CD8-positive, alpha-beta T cell (primary cell): ENCODE measurements at regions of chr7 and their contacts with region 1.

Region 1: DNA sequence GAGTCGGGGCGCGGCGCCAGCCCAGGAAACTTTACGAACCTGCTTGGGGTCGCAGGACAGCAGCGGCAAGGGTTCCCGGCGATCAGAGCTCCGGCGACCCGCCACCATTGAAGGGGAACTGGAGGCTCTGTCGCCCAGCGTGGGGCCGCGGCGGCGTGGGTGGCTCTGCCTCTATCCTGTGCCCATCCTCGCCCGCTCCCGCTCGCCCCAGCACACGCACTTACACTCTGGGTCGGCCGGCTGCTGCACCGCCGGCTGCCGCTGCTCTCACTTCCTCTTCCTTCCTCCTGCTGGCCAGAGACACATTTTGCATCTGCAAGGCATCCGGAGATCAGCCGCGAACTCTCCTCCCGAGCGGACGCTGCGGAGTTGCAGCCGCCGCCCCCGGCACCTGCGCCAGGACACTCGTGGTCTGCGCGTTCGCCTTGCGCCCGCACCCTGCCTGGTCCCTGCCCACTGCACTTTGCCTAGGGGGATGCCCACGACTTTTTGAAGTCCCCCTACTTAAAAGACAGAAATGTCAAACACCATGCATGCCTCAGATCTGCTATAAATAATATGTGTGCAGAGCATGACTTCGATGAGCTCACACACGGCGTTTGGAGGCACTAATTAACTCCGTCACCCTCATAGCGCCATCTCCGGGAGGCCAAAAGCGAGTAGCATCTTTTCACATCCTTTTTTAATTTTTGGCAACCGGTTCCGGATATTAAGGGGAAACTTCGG is at the start of gene ELMO1:
- DNase-seq: peak; percentile 50 to 92 (median 76)
- ATAC-seq: peak; percentile 76
- H3K4me3 ChIP-seq: peak within 1 kb of the TSS; percentile 71 to 91
- H3K4me3 Mint-ChIP-seq: peak within 1 kb of the TSS; percentile 95
- H3K27ac ChIP-seq: peak within 1 kb of the TSS; percentile 86 to 87
- H3K27ac Mint-ChIP-seq: peak within 1 kb of the TSS; percentile 98
- H3K4me1 ChIP-seq: peaks cover 29% of the 10 kb centered on the region
- H3K4me1 Mint-ChIP-seq: peaks cover 48% of the 10 kb centered on the region
- H3K27me3 ChIP-seq: no peaks in the 10 kb centered on the region
- H3K27me3 Mint-ChIP-seq: no peaks in the 10 kb centered on the region
- CTCF ChIP-seq: peak; percentile 68
- total RNA-seq, gene ELMO1: 79.4 to 96.2 TPM

Region 2: GRCh38 chr7:36152756-36153570 is 1295.8 kb before region 1 on chr7 and contains the start of gene EEPD1:
- CTCF ChIA-PET with region 1: no interaction called
- POLR2A ChIA-PET with region 1: no interaction called
- intact Hi-C with region 1: loop called (anchors 2 to 5 kb)
- DNase-seq: peak; percentile 98 to 100 (median 100)
- ATAC-seq: peak; percentile 94
- H3K4me3 ChIP-seq: peak within 1 kb of the TSS; percentile 60 to 73
- H3K4me3 Mint-ChIP-seq: peak within 1 kb of the TSS; percentile 87
- H3K27ac ChIP-seq: peak within 1 kb of the TSS; percentile 35 to 54
- H3K27ac Mint-ChIP-seq: peak within 1 kb of the TSS; percentile 25
- H3K4me1 ChIP-seq: peaks cover 12% of the 10 kb centered on the region
- H3K4me1 Mint-ChIP-seq: peaks cover 24% of the 10 kb centered on the region
- H3K27me3 ChIP-seq: no peaks in the 10 kb centered on the region
- H3K27me3 Mint-ChIP-seq: no peaks in the 10 kb centered on the region
- CTCF ChIP-seq: no peak
- total RNA-seq, gene EEPD1: 0.98 to 1.1 TPM

Region 3: GRCh38 chr7:36280840-36281812 is 1167.7 kb before region 1 on chr7:
- CTCF ChIA-PET with region 1: no interaction called
- POLR2A ChIA-PET with region 1: no interaction called
- intact Hi-C with region 1: no loop called
- DNase-seq: peak in 2 of 9 experiments; percentile 24 to 33
- ATAC-seq: no peak
- H3K4me3 ChIP-seq: no peak overlapping the region
- H3K4me3 Mint-ChIP-seq: no peak overlapping the region
- H3K27ac ChIP-seq: no peak overlapping the region
- H3K27ac Mint-ChIP-seq: no peak overlapping the region
- H3K4me1 ChIP-seq: peaks cover 34% of the 10 kb centered on the region
- H3K4me1 Mint-ChIP-seq: peaks cover 31% of the 10 kb centered on the region
- H3K27me3 ChIP-seq: no peaks in the 10 kb centered on the region
- H3K27me3 Mint-ChIP-seq: no peaks in the 10 kb centered on the region
- CTCF ChIP-seq: no peak

Region 4: DNA sequence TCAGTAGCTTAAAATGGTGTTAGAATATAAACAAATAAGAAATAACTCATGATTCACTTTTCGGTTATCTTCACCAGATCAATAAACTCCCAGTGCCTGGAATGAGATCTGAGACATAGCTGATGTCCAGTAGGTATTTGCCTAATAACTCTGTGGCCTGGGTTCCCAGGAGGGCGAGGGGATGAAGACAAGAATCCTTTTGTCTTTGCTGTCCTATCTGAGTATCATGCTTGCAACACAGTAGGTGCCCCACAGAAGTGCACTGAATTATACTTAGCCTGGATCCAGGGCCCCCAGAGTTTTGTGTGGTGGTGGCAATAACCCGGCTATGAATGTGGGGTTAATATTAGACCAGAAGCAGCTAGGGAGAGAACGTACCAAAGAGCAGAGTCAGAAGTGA is 374.4 kb before region 1 on chr7:
- CTCF ChIA-PET with region 1: no interaction called
- POLR2A ChIA-PET with region 1: no interaction called
- intact Hi-C with region 1: no loop called
- DNase-seq: no peak
- ATAC-seq: no peak
- H3K4me3 ChIP-seq: no peak overlapping the region
- H3K4me3 Mint-ChIP-seq: no peak overlapping the region
- H3K27ac ChIP-seq: no peak overlapping the region
- H3K27ac Mint-ChIP-seq: no peak overlapping the region
- H3K4me1 ChIP-seq: no peaks in the 10 kb centered on the region
- H3K4me1 Mint-ChIP-seq: no peaks in the 10 kb centered on the region
- H3K27me3 ChIP-seq: no peaks in the 10 kb centered on the region
- H3K27me3 Mint-ChIP-seq: no peaks in the 10 kb centered on the region
- CTCF ChIP-seq: no peak

Region 5: GRCh38 chr7:37160656-37161055 is 288.1 kb before region 1 on chr7:
- CTCF ChIA-PET with region 1: no interaction called
- POLR2A ChIA-PET with region 1: no interaction called
- intact Hi-C with region 1: no loop called
- DNase-seq: no peak
- ATAC-seq: no peak
- H3K4me3 ChIP-seq: no peak overlapping the region
- H3K4me3 Mint-ChIP-seq: no peak overlapping the region
- H3K27ac ChIP-seq: no peak overlapping the region
- H3K27ac Mint-ChIP-seq: peak overlapping the region; percentile 46
- H3K4me1 ChIP-seq: no peaks in the 10 kb centered on the region
- H3K4me1 Mint-ChIP-seq: peaks cover 2% of the 10 kb centered on the region
- H3K27me3 ChIP-seq: no peaks in the 10 kb centered on the region
- H3K27me3 Mint-ChIP-seq: no peaks in the 10 kb centered on the region
- CTCF ChIP-seq: no peak

Region 6: DNA sequence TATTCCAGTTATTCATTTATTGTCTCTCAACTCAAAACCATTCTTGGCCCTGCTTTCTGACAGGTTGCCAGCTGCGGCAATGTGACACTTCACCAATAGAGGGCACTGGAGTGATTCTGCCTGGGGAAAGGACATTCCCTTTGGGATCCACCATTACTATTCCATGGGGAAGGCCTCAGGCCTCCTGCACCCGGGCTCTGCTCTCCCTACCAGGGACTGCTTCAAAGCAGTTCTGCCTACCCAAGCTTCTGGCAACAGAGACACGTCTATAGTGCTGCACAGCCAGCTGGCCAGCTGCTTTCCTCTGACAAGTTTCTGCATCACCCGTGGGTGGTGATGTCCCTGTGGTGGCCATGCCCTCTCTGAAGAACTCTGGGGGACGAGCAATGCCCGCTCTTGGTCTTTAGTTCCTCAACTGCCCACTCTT is 164.0 kb before region 1 on chr7:
- CTCF ChIA-PET with region 1: interaction called, 6 read pairs
- POLR2A ChIA-PET with region 1: interaction called, 8 read pairs
- intact Hi-C with region 1: loop called in 1 of 2 experiments (anchors 1 kb)
- DNase-seq: peak in 6 of 9 experiments; percentile 24 to 61 (median 50)
- ATAC-seq: peak; percentile 46
- H3K4me3 ChIP-seq: no peak overlapping the region
- H3K4me3 Mint-ChIP-seq: no peak overlapping the region
- H3K27ac ChIP-seq: no peak overlapping the region
- H3K27ac Mint-ChIP-seq: no peak overlapping the region
- H3K4me1 ChIP-seq: peaks cover 12% of the 10 kb centered on the region
- H3K4me1 Mint-ChIP-seq: peaks cover 39% of the 10 kb centered on the region
- H3K27me3 ChIP-seq: no peaks in the 10 kb centered on the region
- H3K27me3 Mint-ChIP-seq: no peaks in the 10 kb centered on the region
- CTCF ChIP-seq: peak; percentile 76

Region 7: GRCh38 chr7:37297546-37297945 is 151.3 kb before region 1 on chr7:
- CTCF ChIA-PET with region 1: no interaction called
- POLR2A ChIA-PET with region 1: no interaction called
- intact Hi-C with region 1: no loop called
- DNase-seq: no peak
- ATAC-seq: no peak
- H3K4me3 ChIP-seq: no peak overlapping the region
- H3K4me3 Mint-ChIP-seq: no peak overlapping the region
- H3K27ac ChIP-seq: no peak overlapping the region
- H3K27ac Mint-ChIP-seq: no peak overlapping the region
- H3K4me1 ChIP-seq: no peaks in the 10 kb centered on the region
- H3K4me1 Mint-ChIP-seq: peaks cover 1% of the 10 kb centered on the region
- H3K27me3 ChIP-seq: no peaks in the 10 kb centered on the region
- H3K27me3 Mint-ChIP-seq: no peaks in the 10 kb centered on the region
- CTCF ChIP-seq: no peak

Region 8: DNA sequence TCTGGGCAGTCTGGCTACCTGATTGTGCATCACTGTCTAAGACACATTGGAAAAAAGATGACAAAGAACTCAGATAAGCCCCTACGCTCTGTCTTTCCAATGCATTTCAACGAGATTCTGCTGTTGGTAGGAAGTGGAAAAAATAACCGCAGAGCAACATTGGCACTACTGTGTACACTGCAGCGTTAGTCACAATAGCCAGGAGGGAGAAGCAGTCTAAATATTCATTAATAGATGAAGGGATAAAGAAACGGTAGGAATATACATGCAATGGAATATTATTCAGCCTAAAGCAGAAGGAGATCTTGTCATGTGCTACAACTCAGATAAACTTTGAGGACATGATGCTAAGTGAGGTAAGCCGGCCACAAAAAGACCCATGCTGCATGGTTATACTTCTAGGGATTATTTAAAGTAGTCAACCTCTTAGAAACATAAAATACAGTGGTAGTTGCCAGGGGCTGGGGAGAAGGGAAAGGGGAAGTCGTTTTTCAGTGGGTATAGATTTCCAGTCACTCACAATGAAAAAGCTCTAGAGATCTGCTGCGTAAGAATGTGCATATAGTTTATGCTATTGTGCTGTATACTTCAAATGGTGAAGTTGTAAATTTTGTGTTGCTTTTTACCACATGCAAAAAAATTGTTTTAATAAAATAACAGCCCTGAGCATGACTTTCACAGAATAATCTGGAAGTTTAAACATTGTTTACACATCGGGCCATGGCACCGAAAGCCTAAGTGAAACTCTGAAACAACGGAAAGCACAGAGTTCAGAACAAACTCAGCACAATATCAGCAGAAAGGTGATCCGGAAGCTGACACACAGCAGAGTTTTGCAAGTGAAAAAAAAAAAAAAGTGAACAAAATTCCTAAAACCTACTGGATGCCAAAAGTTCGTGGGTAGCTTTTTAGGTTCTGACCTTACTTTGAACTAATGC is 40.2 kb before region 1 on chr7:
- CTCF ChIA-PET with region 1: interaction called, 3 read pairs
- POLR2A ChIA-PET with region 1: interaction called, 27 read pairs
- intact Hi-C with region 1: loop called in 1 of 2 experiments (anchors 1 kb)
- DNase-seq: peak in 2 of 9 experiments; percentile 10 to 34
- ATAC-seq: peak; percentile 64
- H3K4me3 ChIP-seq: peak overlapping the region; percentile 21 to 23
- H3K4me3 Mint-ChIP-seq: peak overlapping the region; percentile 81
- H3K27ac ChIP-seq: no peak overlapping the region
- H3K27ac Mint-ChIP-seq: peak overlapping the region; percentile 81
- H3K4me1 ChIP-seq: peaks cover 36% of the 10 kb centered on the region
- H3K4me1 Mint-ChIP-seq: peaks cover 65% of the 10 kb centered on the region
- H3K27me3 ChIP-seq: no peaks in the 10 kb centered on the region
- H3K27me3 Mint-ChIP-seq: no peaks in the 10 kb centered on the region
- CTCF ChIP-seq: no peak

Region 9: GRCh38 chr7:37495574-37496184 is 46.9 kb after region 1 on chr7:
- CTCF ChIA-PET with region 1: interaction called, 6 read pairs
- POLR2A ChIA-PET with region 1: interaction called, 4 read pairs
- intact Hi-C with region 1: loop called in 1 of 2 experiments (anchors 1 kb)
- DNase-seq: peak in 2 of 9 experiments; percentile 42 to 53
- ATAC-seq: peak; percentile 56
- H3K4me3 ChIP-seq: no peak overlapping the region
- H3K4me3 Mint-ChIP-seq: no peak overlapping the region
- H3K27ac ChIP-seq: no peak overlapping the region
- H3K27ac Mint-ChIP-seq: no peak overlapping the region
- H3K4me1 ChIP-seq: no peaks in the 10 kb centered on the region
- H3K4me1 Mint-ChIP-seq: no peaks in the 10 kb centered on the region
- H3K27me3 ChIP-seq: peaks cover 0 to 2% of the 10 kb centered on the region in 2 experiments
- H3K27me3 Mint-ChIP-seq: no peaks in the 10 kb centered on the region
- CTCF ChIP-seq: peak; percentile 93